Psoas muscle (tissue), 8 donors: ENCODE measurements at regions of chr15 and their contacts with region 1.

Region 1: GRCh38 chr15:25739687-25740121 is 123.4 kb downstream of the ATP10A start:
- DNase-seq: no peak
- ATAC-seq: peak in 2 of 4 donors; percentile 37 to 50
- H3K4me3 ChIP-seq: no peak overlapping the region
- H3K27ac ChIP-seq: no peak overlapping the region
- H3K4me1 ChIP-seq: peaks cover 11% of the 10 kb centered on the region
- H3K27me3 ChIP-seq: no peaks in the 10 kb centered on the region
- CTCF ChIP-seq: peak; percentile 27

Region 2: GRCh38 chr15:25543196-25543595 is 196.5 kb before region 1 on chr15:
- intact Hi-C with region 1: no loop called
- DNase-seq: no peak
- ATAC-seq: peak; percentile 18 to 47 (median 30)
- H3K4me3 ChIP-seq: no peak overlapping the region
- H3K27ac ChIP-seq: no peak overlapping the region
- H3K4me1 ChIP-seq: peaks cover 12% of the 10 kb centered on the region
- H3K27me3 ChIP-seq: no peaks in the 10 kb centered on the region
- CTCF ChIP-seq: no peak

Region 3: GRCh38 chr15:25775317-25775912 is 35.7 kb after region 1 on chr15:
- intact Hi-C with region 1: loop called in 1 of 2 experiments (anchors 2 kb)
- DNase-seq: peak; percentile 70 to 81
- ATAC-seq: peak; percentile 81 to 91 (median 85)
- H3K4me3 ChIP-seq: no peak overlapping the region
- H3K27ac ChIP-seq: no peak overlapping the region
- H3K4me1 ChIP-seq: peaks cover 18% of the 10 kb centered on the region
- H3K27me3 ChIP-seq: no peaks in the 10 kb centered on the region
- CTCF ChIP-seq: no peak

Region 4: GRCh38 chr15:25933456-25934158 is 193.9 kb after region 1 on chr15:
- intact Hi-C with region 1: loop called (anchors 5 to 10 kb)
- DNase-seq: peak; percentile 68 to 80
- ATAC-seq: peak; percentile 79 to 94 (median 86)
- H3K4me3 ChIP-seq: peak overlapping the region; percentile 21
- H3K27ac ChIP-seq: no peak overlapping the region
- H3K4me1 ChIP-seq: no peaks in the 10 kb centered on the region
- H3K27me3 ChIP-seq: no peaks in the 10 kb centered on the region
- CTCF ChIP-seq: peak; percentile 64